Activated T-helper 2 cell treated with anti-CD3 and anti-CD28 coated beads, Interferon-gamma antibody, Interleukin-2, Interleukin-4, amounts not matched to agents 10 μg/mL and 5 μg/mL and 100 μg/mL, durations not matched to agents 14 hours and 24 hours and 36 hours (primary cell): ENCODE measurements at regions of chr10 and their contacts with region 1.

Region 1: GRCh38 chr10:63629363-63630084 is 108.3 kb downstream of the REEP3 start:
- DNase-seq: peak; percentile 72
- H3K4me3 Mint-ChIP-seq: peak overlapping the region; percentile 90
- H3K27ac Mint-ChIP-seq: peak overlapping the region; percentile 92
- H3K4me1 Mint-ChIP-seq: peaks cover 40% of the 10 kb centered on the region
- H3K27me3 Mint-ChIP-seq: peaks cover 6% of the 10 kb centered on the region

Region 2: GRCh38 chr10:63166742-63167258 is 462.7 kb before region 1 on chr10:
- intact Hi-C with region 1: loop called (anchors 1 kb)
- DNase-seq: no peak
- H3K4me3 Mint-ChIP-seq: no peak overlapping the region
- H3K27ac Mint-ChIP-seq: no peak overlapping the region
- H3K4me1 Mint-ChIP-seq: peaks cover 29% of the 10 kb centered on the region
- H3K27me3 Mint-ChIP-seq: no peaks in the 10 kb centered on the region

Region 3: GRCh38 chr10:63355682-63356081 is 273.8 kb before region 1 on chr10:
- intact Hi-C with region 1: loop called (anchors 1 kb)
- DNase-seq: no peak
- H3K4me3 Mint-ChIP-seq: no peak overlapping the region
- H3K27ac Mint-ChIP-seq: peak overlapping the region; percentile 28
- H3K4me1 Mint-ChIP-seq: peaks cover 17% of the 10 kb centered on the region
- H3K27me3 Mint-ChIP-seq: no peaks in the 10 kb centered on the region

Region 4: GRCh38 chr10:63465293-63466143 is 164.0 kb before region 1 on chr10 and contains the start of gene JMJD1C:
- intact Hi-C with region 1: loop called (anchors 1 kb)
- DNase-seq: peak; percentile 47
- H3K4me3 Mint-ChIP-seq: peak within 1 kb of the TSS; percentile 91
- H3K27ac Mint-ChIP-seq: peak within 1 kb of the TSS; percentile 58
- H3K4me1 Mint-ChIP-seq: peaks cover 12% of the 10 kb centered on the region
- H3K27me3 Mint-ChIP-seq: peaks cover 32% of the 10 kb centered on the region
- total RNA-seq, gene JMJD1C: 33.8 and 35.2 TPM in 2 replicates

Region 5: GRCh38 chr10:63666836-63667383 is 37.4 kb after region 1 on chr10:
- intact Hi-C with region 1: loop called (anchors 5 kb)
- DNase-seq: no peak
- H3K4me3 Mint-ChIP-seq: no peak overlapping the region
- H3K27ac Mint-ChIP-seq: no peak overlapping the region
- H3K4me1 Mint-ChIP-seq: peaks cover 8% of the 10 kb centered on the region
- H3K27me3 Mint-ChIP-seq: peaks cover 29% of the 10 kb centered on the region

Region 6: GRCh38 chr10:63720072-63720537 is 90.6 kb after region 1 on chr10:
- intact Hi-C with region 1: loop called (anchors 2 kb)
- DNase-seq: peak; percentile 33
- H3K4me3 Mint-ChIP-seq: no peak overlapping the region
- H3K27ac Mint-ChIP-seq: no peak overlapping the region
- H3K4me1 Mint-ChIP-seq: peaks cover 21% of the 10 kb centered on the region
- H3K27me3 Mint-ChIP-seq: peaks cover 25% of the 10 kb centered on the region